Naive thymus-derived CD4-positive, alpha-beta T cell (primary cell): ENCODE measurements at regions of chr19 and their contacts with region 1.

Region 1: GRCh38 chr19:35213663-35214632 is 14.6 kb downstream of the FAM187B start:
- DNase-seq: peak; percentile 35 to 97 (median 90)
- ATAC-seq: peak; percentile 49
- H3K4me3 ChIP-seq: peak overlapping the region; percentile 24
- H3K4me3 Mint-ChIP-seq: peak overlapping the region; percentile 31 to 91 (median 71)
- H3K27ac ChIP-seq: peak overlapping the region; percentile 91
- H3K27ac Mint-ChIP-seq: peak overlapping the region; percentile 98 to 100 (median 100)
- H3K4me1 ChIP-seq: peaks cover 47 to 52% of the 10 kb centered on the region in 2 donors
- H3K4me1 Mint-ChIP-seq: peaks cover 41 to 81% (median 70%) of the 10 kb centered on the region in 7 donors
- H3K27me3 ChIP-seq: no peaks in the 10 kb centered on the region
- H3K27me3 Mint-ChIP-seq: no peaks in the 10 kb centered on the region

Region 2: GRCh38 chr19:34999498-35000341 is 214.2 kb before region 1 on chr19 and contains the start of gene GRAMD1A:
- CTCF ChIA-PET with region 1: interaction called, 4 read pairs
- POLR2A ChIA-PET with region 1: interaction called, 3 read pairs
- intact Hi-C with region 1: loop called in 1 of 2 experiments (anchors 5 kb)
- DNase-seq: peak; percentile 48 to 86 (median 63)
- ATAC-seq: peak; percentile 74
- H3K4me3 ChIP-seq: peak within 1 kb of the TSS; percentile 72
- H3K4me3 Mint-ChIP-seq: peak within 1 kb of the TSS; percentile 94 to 100 (median 98)
- H3K27ac ChIP-seq: peak within 1 kb of the TSS; percentile 97
- H3K27ac Mint-ChIP-seq: peak within 1 kb of the TSS; percentile 95 to 100 (median 98)
- H3K4me1 ChIP-seq: peaks cover 66 to 72% of the 10 kb centered on the region in 2 donors
- H3K4me1 Mint-ChIP-seq: peaks cover 58 to 81% (median 73%) of the 10 kb centered on the region in 7 donors
- H3K27me3 ChIP-seq: no peaks in the 10 kb centered on the region
- H3K27me3 Mint-ChIP-seq: no peaks in the 10 kb centered on the region
- total RNA-seq, gene GRAMD1A: 90.1 to 286 (median 253) TPM

Region 3: DNA sequence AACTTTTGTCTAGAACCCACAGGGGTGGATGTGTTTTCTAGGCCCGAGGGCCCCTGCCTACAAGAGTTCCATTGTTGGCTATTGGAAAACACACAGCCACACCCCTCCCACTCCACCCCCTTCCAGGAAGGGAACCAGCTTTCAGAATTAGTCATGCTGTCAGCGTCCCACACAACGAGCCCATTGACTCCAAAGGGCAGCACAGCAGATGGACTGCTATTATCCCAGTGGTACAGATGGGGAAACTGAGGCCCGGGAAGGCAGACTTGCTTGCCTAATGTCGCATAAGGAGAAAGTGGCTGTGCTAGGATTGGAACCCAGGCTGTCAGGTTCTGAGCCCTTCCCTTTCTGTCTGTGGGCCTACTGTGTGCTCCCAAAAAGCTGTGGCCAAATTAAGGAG is 106.4 kb before region 1 on chr19:
- CTCF ChIA-PET with region 1: no interaction called
- POLR2A ChIA-PET with region 1: no interaction called
- intact Hi-C with region 1: no loop called
- DNase-seq: peak in 1 of 9 donors; percentile 38
- ATAC-seq: no peak
- H3K4me3 ChIP-seq: no peak overlapping the region
- H3K4me3 Mint-ChIP-seq: no peak overlapping the region
- H3K27ac ChIP-seq: no peak overlapping the region
- H3K27ac Mint-ChIP-seq: peak overlapping the region in 1 of 9 donors; percentile 78
- H3K4me1 ChIP-seq: no peaks in the 10 kb centered on the region
- H3K4me1 Mint-ChIP-seq: no peaks in the 10 kb centered on the region
- H3K27me3 ChIP-seq: no peaks in the 10 kb centered on the region
- H3K27me3 Mint-ChIP-seq: peaks cover 0 to 14% (median 0%) of the 10 kb centered on the region in 5 donors

Region 4: GRCh38 chr19:35140962-35141637 is 72.8 kb before region 1 on chr19:
- CTCF ChIA-PET with region 1: interaction called, 36 read pairs
- POLR2A ChIA-PET with region 1: interaction called, 28 read pairs
- intact Hi-C with region 1: loop called (anchors 1 kb)
- DNase-seq: peak; percentile 88 to 97 (median 92)
- ATAC-seq: peak; percentile 93
- H3K4me3 ChIP-seq: peak overlapping the region; percentile 65
- H3K4me3 Mint-ChIP-seq: peak overlapping the region; percentile 80 to 96 (median 85)
- H3K27ac ChIP-seq: no peak overlapping the region
- H3K27ac Mint-ChIP-seq: peak overlapping the region; percentile 78 to 93 (median 84)
- H3K4me1 ChIP-seq: peaks cover 28 to 34% of the 10 kb centered on the region in 2 donors
- H3K4me1 Mint-ChIP-seq: peaks cover 31 to 47% (median 37%) of the 10 kb centered on the region in 7 donors
- H3K27me3 ChIP-seq: no peaks in the 10 kb centered on the region
- H3K27me3 Mint-ChIP-seq: peaks cover 0 to 33% (median 0%) of the 10 kb centered on the region in 5 donors

Region 5: GRCh38 chr19:35168207-35168606 is 45.7 kb before region 1 on chr19:
- CTCF ChIA-PET with region 1: no interaction called
- POLR2A ChIA-PET with region 1: interaction called, 9 read pairs
- intact Hi-C with region 1: loop called (anchors 5 kb)
- DNase-seq: no peak
- ATAC-seq: no peak
- H3K4me3 ChIP-seq: no peak overlapping the region
- H3K4me3 Mint-ChIP-seq: peak overlapping the region in 2 of 10 donors; percentile 19 to 43
- H3K27ac ChIP-seq: peak overlapping the region; percentile 46
- H3K27ac Mint-ChIP-seq: peak overlapping the region; percentile 26 to 96 (median 91)
- H3K4me1 ChIP-seq: peaks cover 34 to 36% of the 10 kb centered on the region in 2 donors
- H3K4me1 Mint-ChIP-seq: peaks cover 23 to 55% (median 44%) of the 10 kb centered on the region in 7 donors
- H3K27me3 ChIP-seq: no peaks in the 10 kb centered on the region
- H3K27me3 Mint-ChIP-seq: no peaks in the 10 kb centered on the region

Region 6: DNA sequence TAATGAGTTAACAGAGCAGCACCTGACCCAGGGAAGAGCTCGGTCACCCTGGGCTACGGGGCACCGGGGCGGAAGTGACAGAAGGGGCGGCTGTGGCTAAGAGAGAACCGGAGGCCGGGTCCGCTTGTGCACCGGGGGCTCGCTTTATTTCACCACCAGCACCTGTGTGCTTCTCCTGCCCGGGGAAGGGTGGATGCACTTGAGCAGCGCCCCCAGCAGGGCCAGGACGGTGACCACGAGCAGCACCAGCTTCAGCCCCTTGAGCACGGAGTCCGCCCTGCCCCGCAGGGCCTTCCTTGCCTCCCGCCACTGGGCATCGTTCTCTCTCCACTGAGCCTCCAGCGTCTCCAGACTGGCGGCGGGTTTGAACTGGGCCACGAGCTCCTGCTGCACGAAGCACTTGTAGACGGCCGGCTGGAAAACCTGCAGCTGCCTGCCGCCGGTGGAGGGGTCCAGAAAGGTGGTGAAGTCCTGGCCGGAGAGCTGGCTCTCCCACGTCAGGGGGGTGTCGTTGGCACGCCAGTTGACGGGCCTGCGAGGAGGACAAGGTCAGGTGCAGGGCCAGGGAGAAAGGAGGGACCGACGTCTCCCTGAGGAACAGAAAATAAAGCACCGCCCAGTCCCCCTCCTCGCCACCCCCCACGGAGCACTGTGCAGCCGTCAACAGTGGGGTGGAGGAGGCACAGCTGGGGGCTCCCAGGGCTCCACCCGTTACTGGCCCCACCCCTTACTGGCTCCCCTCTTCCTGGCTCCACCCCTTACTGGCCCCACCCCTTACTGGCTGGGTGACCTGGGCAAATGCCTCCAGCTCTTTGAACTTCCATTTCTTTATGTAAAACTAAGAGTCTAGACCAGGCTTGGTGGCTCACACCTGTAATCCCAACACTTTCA is 11.0 kb after region 1 on chr19:
- CTCF ChIA-PET with region 1: interaction called, 3 read pairs
- POLR2A ChIA-PET with region 1: interaction called, 12 read pairs
- intact Hi-C with region 1: no loop called
- DNase-seq: peak in 1 of 9 donors; percentile 21
- ATAC-seq: no peak
- H3K4me3 ChIP-seq: no peak overlapping the region
- H3K4me3 Mint-ChIP-seq: no peak overlapping the region
- H3K27ac ChIP-seq: no peak overlapping the region
- H3K27ac Mint-ChIP-seq: peak overlapping the region in 6 of 9 donors; percentile 22 to 84 (median 48)
- H3K4me1 ChIP-seq: peaks cover 0 to 28% of the 10 kb centered on the region in 2 donors
- H3K4me1 Mint-ChIP-seq: peaks cover 19 to 42% (median 36%) of the 10 kb centered on the region in 7 donors
- H3K27me3 ChIP-seq: no peaks in the 10 kb centered on the region
- H3K27me3 Mint-ChIP-seq: no peaks in the 10 kb centered on the region

Region 7: GRCh38 chr19:35269421-35270117 is 55.6 kb after region 1 on chr19:
- CTCF ChIA-PET with region 1: interaction called, 3 read pairs
- POLR2A ChIA-PET with region 1: interaction called, 29 read pairs
- intact Hi-C with region 1: loop called in 1 of 2 experiments (anchors 1 kb)
- DNase-seq: peak; percentile 50 to 79 (median 66)
- ATAC-seq: peak; percentile 69
- H3K4me3 ChIP-seq: peak overlapping the region; percentile 44
- H3K4me3 Mint-ChIP-seq: peak overlapping the region; percentile 64 to 93 (median 75)
- H3K27ac ChIP-seq: peak overlapping the region; percentile 66
- H3K27ac Mint-ChIP-seq: peak overlapping the region; percentile 40 to 90 (median 74)
- H3K4me1 ChIP-seq: peaks cover 6 to 17% of the 10 kb centered on the region in 2 donors
- H3K4me1 Mint-ChIP-seq: peaks cover 28 to 54% (median 45%) of the 10 kb centered on the region in 7 donors
- H3K27me3 ChIP-seq: no peaks in the 10 kb centered on the region
- H3K27me3 Mint-ChIP-seq: no peaks in the 10 kb centered on the region